Heart right ventricle (tissue), 16 donors: ENCODE measurements at regions of chr5 and their contacts with region 1.

Region 1: DNA sequence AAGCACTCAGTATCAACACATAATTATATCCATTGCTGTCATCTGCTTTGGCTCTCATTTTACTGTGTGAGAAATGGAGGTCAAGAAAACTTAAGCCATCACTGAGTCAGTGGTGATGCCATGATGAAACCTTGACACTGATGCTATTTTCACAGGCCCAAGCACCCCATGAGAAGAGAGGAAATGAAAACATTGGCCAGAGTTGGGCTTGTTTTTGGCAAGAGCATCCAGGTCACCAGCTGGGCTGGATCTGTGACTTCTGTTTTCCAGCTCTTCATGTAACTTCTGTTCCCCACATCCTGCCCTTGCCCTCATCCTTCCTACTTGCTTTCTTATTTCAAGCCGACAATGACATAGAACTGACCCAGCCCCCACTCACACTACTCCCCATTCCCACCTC is 10.0 kb downstream of the LCP2 start:
- DNase-seq: peak in 1 of 2 donors; percentile 76
- ATAC-seq: peak; percentile 69 to 87 (median 80)
- H3K4me3 ChIP-seq: no peak overlapping the region
- H3K27ac ChIP-seq: peak overlapping the region in 7 of 10 donors; percentile 52 to 88 (median 59)
- H3K4me1 ChIP-seq: peaks cover 0 to 100% (median 13%) of the 10 kb centered on the region in 9 donors
- H3K27me3 ChIP-seq: no peaks in the 10 kb centered on the region
- CTCF ChIP-seq: no peak

Region 2: DNA sequence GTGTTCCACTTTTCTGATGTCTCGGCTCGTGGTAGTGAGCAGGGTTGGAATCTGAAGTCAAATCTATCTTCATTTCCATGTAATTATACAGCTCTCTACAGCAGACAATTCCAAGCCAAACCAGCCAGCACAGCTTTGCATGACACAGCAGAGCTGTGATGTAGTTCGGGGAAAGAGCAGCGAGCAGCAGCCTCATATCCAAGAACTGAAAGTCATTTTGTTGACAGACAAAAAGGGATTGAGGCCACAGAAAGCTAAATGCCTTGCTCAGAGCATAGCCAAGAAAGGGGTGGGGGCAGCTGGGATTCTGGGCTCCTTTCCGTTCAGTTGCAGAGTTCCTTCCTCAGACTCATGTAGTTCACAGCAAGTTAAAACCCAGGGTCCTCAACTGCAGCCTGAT is 22.0 kb before region 1 on chr5:
- intact Hi-C with region 1: no loop called
- DNase-seq: peak; percentile 18 to 56
- ATAC-seq: peak; percentile 56 to 80 (median 70)
- H3K4me3 ChIP-seq: no peak overlapping the region
- H3K27ac ChIP-seq: peak overlapping the region in 4 of 10 donors; percentile 9 to 88 (median 18)
- H3K4me1 ChIP-seq: peaks cover 0 to 68% (median 13%) of the 10 kb centered on the region in 9 donors
- H3K27me3 ChIP-seq: peaks cover 0 to 16% (median 0%) of the 10 kb centered on the region in 7 donors
- CTCF ChIP-seq: no peak

Region 3: DNA sequence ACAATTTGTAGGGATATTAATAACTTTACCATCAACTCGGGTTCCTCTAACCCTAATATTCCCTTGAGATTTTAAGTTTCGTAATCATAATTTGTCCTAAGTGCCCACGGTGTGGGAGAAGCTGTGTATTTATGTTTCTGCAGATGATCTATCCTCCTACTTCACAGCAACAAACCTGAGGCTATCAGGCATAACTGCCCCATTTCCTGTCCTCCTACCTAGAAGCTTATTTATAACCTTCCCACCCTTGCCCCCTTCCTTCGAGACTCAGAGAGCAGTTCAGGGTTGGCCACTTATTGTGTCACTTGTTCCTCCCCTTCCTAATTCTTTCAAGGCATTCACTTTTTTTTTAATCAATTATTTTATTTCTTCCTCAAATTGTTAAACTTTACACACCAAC is 39.6 kb after region 1 on chr5:
- intact Hi-C with region 1: loop called in 1 of 10 experiments (anchors 5 kb)
- DNase-seq: no peak
- ATAC-seq: no peak
- H3K4me3 ChIP-seq: no peak overlapping the region
- H3K27ac ChIP-seq: peak overlapping the region in 1 of 10 donors; percentile 44
- H3K4me1 ChIP-seq: peaks cover 6 to 54% (median 16%) of the 10 kb centered on the region in 9 donors
- H3K27me3 ChIP-seq: no peaks in the 10 kb centered on the region
- CTCF ChIP-seq: no peak

Region 4: DNA sequence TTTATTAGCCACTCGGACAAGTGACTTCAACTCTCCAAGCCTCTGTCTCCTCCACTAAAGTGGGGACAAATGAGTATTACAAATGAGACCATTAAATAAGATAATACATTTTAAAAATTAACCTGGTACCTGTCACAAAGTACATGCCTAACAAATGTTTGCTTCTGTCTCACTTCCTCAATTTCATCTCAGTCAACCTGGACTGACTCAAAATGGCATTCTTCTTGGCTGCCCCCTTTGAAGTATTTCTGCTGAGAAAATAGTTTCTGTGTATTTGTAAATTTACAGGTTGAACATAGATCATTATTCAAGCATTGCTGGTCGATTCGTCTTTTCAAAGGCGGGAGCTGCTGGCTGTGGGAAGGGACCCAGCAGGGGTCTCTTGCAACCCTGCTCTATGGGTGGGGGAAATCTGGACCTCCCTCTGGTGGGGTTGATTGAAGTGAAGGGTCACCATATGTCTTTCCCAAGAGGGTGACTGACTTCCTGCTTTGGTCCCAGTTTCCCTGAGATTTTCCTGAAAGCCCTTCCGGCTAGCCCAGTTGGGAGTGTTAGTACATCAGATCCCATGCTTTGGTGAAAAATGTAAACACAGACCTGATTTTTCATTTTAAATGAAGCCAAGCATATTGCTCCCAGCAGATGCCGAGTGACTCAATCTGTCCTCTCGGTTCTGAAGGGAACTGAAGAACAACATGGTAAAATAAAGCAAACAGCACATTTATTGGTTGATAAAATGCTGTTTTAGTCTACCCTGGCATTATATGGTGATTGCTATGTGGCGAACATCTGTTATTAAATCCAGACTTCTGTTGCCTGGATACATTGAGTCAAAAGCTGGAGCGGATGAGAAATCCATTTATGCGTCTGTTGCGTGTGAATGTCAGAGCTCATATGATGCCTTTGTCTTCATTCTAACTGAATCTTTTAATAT is 289.3 kb after region 1 on chr5:
- intact Hi-C with region 1: no loop called
- DNase-seq: no peak
- ATAC-seq: no peak
- H3K4me3 ChIP-seq: no peak overlapping the region
- H3K27ac ChIP-seq: no peak overlapping the region
- H3K4me1 ChIP-seq: peaks cover 0 to 4% (median 0%) of the 10 kb centered on the region in 9 donors
- H3K27me3 ChIP-seq: peaks cover 0 to 17% (median 0%) of the 10 kb centered on the region in 7 donors
- CTCF ChIP-seq: no peak